OCI-LY7 (cell line): ENCODE measurements at regions of chr6 and their contacts with region 1.

Region 1: GRCh38 chr6:28838634-28839442 is 84.9 kb downstream of the TRIM27 start:
- DNase-seq: peak; percentile 92
- H3K4me3 ChIP-seq: peak overlapping the region; percentile 76
- H3K27ac ChIP-seq: peak overlapping the region; percentile 84
- H3K4me1 ChIP-seq: peaks cover 23% of the 10 kb centered on the region
- CTCF ChIP-seq: peak; percentile 88

Region 2: DNA sequence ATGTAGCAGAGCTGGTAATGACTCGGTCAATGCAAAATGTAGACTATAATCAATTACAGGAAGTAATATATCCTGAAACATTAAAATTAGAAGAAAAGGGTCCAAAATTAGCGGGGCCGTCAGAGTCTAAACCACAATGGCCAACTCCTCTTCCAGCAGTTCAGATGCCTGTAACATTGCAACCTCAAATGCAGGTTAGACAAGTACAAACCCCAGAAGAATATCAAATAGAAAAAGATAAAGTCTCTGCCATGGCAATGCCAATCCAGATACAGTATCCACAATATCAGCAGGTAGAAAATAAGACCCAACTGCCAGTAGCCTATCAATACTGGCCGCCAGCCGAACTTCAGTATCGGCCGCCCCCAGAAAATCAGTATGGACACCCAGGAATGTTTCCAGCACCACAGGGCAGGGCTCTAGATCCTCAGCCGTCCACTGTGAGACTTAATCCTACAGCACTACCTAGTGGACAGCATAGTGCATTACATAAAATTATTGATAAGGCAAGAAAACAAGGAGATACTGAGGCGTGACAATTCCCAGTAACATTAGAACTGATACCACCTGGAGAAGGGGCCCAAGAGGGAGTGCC is 154.8 kb before region 1 on chr6:
- CTCF ChIA-PET with region 1: no interaction called
- POLR2A ChIA-PET with region 1: no interaction called
- intact Hi-C with region 1: loop called (anchors 1 kb)
- DNase-seq: peak; percentile 65
- H3K4me3 ChIP-seq: no peak overlapping the region
- H3K27ac ChIP-seq: no peak overlapping the region
- H3K4me1 ChIP-seq: peaks cover 3% of the 10 kb centered on the region
- CTCF ChIP-seq: peak; percentile 85

Region 3: GRCh38 chr6:28769626-28770402 is 69.0 kb before region 1 on chr6:
- CTCF ChIA-PET with region 1: interaction called, 3 read pairs
- POLR2A ChIA-PET with region 1: no interaction called
- intact Hi-C with region 1: loop called (anchors 5 kb)
- DNase-seq: no peak
- H3K4me3 ChIP-seq: no peak overlapping the region
- H3K27ac ChIP-seq: no peak overlapping the region
- H3K4me1 ChIP-seq: no peaks in the 10 kb centered on the region
- CTCF ChIP-seq: peak; percentile 44

Region 4: DNA sequence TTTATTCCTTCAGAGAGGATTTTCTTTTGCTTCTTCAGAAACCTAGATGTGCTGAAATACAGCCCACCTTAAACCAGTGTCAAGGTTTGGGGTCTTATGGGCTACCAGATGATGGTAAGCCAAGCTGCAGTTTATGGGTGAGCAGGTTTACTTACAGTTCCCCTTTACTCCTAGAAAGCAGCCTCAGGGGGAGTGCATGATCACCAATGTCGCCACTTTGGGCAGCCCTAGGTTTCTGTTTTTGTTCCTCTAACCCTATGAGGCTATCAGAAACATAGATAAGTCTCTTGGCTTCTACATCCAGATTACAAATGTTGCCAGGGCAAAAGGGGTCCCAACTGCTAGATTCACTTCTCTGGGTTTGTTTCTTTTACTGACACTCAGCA is 17.8 kb after region 1 on chr6:
- CTCF ChIA-PET with region 1: no interaction called
- POLR2A ChIA-PET with region 1: no interaction called
- intact Hi-C with region 1: no loop called
- DNase-seq: peak; percentile 75
- H3K4me3 ChIP-seq: no peak overlapping the region
- H3K27ac ChIP-seq: no peak overlapping the region
- H3K4me1 ChIP-seq: peaks cover 13% of the 10 kb centered on the region
- CTCF ChIP-seq: no peak

Region 5: DNA sequence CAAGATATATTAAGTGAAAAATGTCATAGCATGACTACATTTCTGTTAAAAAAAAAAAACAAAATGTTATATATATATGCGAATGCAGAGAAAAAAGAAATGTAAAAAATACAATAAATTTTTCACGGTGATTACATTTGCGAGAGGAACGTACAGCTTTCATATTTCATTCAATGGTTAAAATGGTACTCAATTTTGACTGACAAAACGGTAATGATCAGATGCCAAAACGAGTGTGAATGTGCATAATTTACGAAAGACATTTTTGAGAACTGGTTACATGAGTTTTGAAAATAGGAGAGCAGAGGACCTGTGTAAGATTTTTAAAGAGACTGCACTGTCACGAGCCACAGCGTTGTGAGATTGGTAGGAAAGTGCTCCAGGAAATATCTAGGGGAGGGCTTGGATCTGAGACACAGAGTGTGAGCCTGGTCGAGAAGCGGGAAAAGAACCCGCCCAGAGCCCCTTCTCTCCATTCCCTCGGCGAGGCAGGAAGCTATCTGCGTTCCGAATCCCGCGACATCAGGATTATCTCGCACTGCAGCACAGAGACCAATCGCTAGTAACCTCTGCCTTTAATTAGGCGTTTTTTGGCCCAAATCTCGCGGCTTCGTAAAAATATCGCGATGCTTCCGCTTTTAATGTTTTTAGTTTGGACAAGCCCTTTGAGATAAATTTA is 56.4 kb after region 1 on chr6:
- CTCF ChIA-PET with region 1: interaction called, 3 read pairs
- POLR2A ChIA-PET with region 1: interaction called, 5 read pairs
- intact Hi-C with region 1: loop called (anchors 1 kb)
- DNase-seq: peak; percentile 97
- H3K4me3 ChIP-seq: peak overlapping the region; percentile 92
- H3K27ac ChIP-seq: peak overlapping the region; percentile 92
- H3K4me1 ChIP-seq: peaks cover 18% of the 10 kb centered on the region
- CTCF ChIP-seq: no peak

Region 6: DNA sequence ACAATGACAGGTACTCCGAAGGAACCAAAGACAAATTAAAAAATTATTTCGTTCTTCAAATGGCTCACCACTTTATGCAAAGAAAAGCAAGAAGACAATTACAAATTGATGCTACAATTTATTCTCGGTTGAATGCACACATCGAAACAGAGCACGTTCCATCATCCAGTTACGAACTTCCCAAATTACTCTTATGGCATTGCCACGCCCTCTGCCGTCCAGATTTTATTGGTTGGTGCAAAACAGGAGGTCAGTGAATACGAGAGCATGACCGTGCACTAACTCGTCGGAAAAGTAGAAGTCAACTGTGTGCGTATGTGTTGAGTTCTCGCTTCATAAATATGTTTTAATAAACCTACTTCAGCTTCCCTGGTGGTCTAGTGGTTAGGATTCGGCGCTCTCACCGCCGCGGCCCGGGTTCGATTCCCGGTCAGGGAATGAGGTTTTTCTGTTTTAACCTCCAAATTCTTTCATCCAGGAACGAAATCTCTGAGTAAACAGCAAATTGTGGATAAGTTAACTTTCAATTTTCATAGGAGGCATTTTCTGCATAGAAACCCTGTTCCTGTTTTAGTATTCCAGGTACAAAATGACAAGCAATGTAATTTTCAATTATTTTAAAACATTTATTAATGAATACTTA is 143.1 kb after region 1 on chr6:
- CTCF ChIA-PET with region 1: interaction called, 4 read pairs
- POLR2A ChIA-PET with region 1: interaction called, 5 read pairs
- intact Hi-C with region 1: loop called (anchors 1 kb)
- DNase-seq: peak; percentile 84
- H3K4me3 ChIP-seq: peak overlapping the region; percentile 98
- H3K27ac ChIP-seq: peak overlapping the region; percentile 37
- H3K4me1 ChIP-seq: peaks cover 22% of the 10 kb centered on the region
- CTCF ChIP-seq: 0 out of 2 replicates have a peak, but pooled peaks have one; percentile 26

Region 7: GRCh38 chr6:29589423-29590048 is 750.7 kb after region 1 on chr6:
- CTCF ChIA-PET with region 1: no interaction called
- POLR2A ChIA-PET with region 1: no interaction called
- intact Hi-C with region 1: loop called (anchors 5 kb)
- DNase-seq: peak; percentile 64
- H3K4me3 ChIP-seq: no peak overlapping the region
- H3K27ac ChIP-seq: no peak overlapping the region
- H3K4me1 ChIP-seq: peaks cover 12% of the 10 kb centered on the region
- CTCF ChIP-seq: peak; percentile 96